ENCODE measurements at regions of chr12 and their contacts with region 1.

Region 1: GRCh38 chr12:76083904-76084862 is at the start of gene NAP1L1:
- DNase-seq: peak; percentile 98
- ATAC-seq: peak; percentile 82
- H3K4me3 ChIP-seq: peak within 1 kb of the TSS; percentile 56 to 94 (median 89)
- H3K4me3 Mint-ChIP-seq: peak within 1 kb of the TSS; percentile 99
- H3K27ac ChIP-seq: peak within 1 kb of the TSS; percentile 96 to 98
- H3K27ac Mint-ChIP-seq: peak within 1 kb of the TSS; percentile 99
- H3K4me1 ChIP-seq: peaks cover 26 to 44% of the 10 kb centered on the region in 2 donors
- H3K4me1 Mint-ChIP-seq: peaks cover 50% of the 10 kb centered on the region
- H3K27me3 ChIP-seq: no peaks in the 10 kb centered on the region
- H3K27me3 Mint-ChIP-seq: no peaks in the 10 kb centered on the region
- CTCF ChIP-seq: no peak
- total RNA-seq, gene NAP1L1: 751 and 766 TPM in 2 replicates

Region 2: GRCh38 chr12:75480469-75480949 is 603.7 kb before region 1 on chr12 and contains the start of gene GLIPR1:
- CTCF ChIA-PET with region 1: no interaction called
- POLR2A ChIA-PET with region 1: no interaction called
- intact Hi-C with region 1: loop called (anchors 2 kb)
- DNase-seq: peak; percentile 79
- ATAC-seq: peak; percentile 82
- H3K4me3 ChIP-seq: peak within 1 kb of the TSS; percentile 66 to 98 (median 80)
- H3K4me3 Mint-ChIP-seq: peak within 1 kb of the TSS; percentile 98
- H3K27ac ChIP-seq: peak within 1 kb of the TSS; percentile 75 to 79
- H3K27ac Mint-ChIP-seq: peak within 1 kb of the TSS; percentile 99
- H3K4me1 ChIP-seq: peaks cover 61 to 64% of the 10 kb centered on the region in 2 donors
- H3K4me1 Mint-ChIP-seq: peaks cover 79% of the 10 kb centered on the region
- H3K27me3 ChIP-seq: no peaks in the 10 kb centered on the region
- H3K27me3 Mint-ChIP-seq: no peaks in the 10 kb centered on the region
- CTCF ChIP-seq: no peak
- total RNA-seq, gene GLIPR1: 117 and 119 TPM in 2 replicates

Region 3: DNA sequence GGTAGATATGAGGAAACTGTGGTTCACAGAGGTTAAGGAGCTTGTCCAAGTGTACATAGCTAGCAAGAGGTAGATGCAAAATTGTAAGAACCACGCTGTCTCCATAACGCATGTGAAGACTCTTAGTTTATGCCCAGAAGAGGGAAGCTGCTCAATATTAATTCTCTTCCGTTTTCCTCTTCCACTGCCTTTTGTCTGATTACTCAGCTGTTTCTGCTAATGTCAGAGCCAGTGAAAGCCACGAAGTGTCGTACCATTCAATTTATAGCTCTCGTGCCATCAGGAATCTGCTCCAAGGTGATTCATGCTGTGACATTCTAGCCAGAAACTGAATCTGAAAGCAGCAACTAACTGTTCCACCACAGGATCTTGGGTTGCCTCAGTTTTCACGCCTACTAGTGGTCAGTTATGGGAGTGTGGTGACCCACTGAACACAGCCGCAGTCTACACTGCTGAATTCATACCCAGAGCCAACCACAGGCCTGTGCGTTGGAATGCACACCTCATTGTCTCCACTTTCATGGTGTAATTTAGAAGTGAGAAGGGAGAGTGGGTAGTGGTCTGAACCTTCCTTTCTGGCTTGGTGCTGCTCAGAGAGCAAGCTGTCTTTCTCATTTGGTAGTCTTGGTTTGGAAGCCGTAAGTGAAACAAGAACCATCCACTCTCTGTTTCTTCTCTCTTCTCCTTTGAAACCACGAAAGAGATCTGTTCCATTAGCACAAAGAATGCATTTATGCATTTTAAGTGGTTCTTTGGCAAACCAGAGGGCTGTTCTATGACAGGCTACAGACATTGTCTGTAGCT is 74.5 kb after region 1 on chr12:
- CTCF ChIA-PET with region 1: interaction called, 3 read pairs
- POLR2A ChIA-PET with region 1: no interaction called
- intact Hi-C with region 1: loop called (anchors 2 kb)
- DNase-seq: peak; percentile 82
- ATAC-seq: peak; percentile 99
- H3K4me3 ChIP-seq: peak overlapping the region; percentile 5 to 68 (median 45)
- H3K4me3 Mint-ChIP-seq: peak overlapping the region; percentile 91
- H3K27ac ChIP-seq: peak overlapping the region; percentile 14 to 76
- H3K27ac Mint-ChIP-seq: peak overlapping the region; percentile 94
- H3K4me1 ChIP-seq: peaks cover 9 to 16% of the 10 kb centered on the region in 2 donors
- H3K4me1 Mint-ChIP-seq: peaks cover 25% of the 10 kb centered on the region
- H3K27me3 ChIP-seq: no peaks in the 10 kb centered on the region
- H3K27me3 Mint-ChIP-seq: no peaks in the 10 kb centered on the region
- CTCF ChIP-seq: peak; percentile 83

Region 4: GRCh38 chr12:76176940-76177339 is 92.8 kb after region 1 on chr12:
- CTCF ChIA-PET with region 1: no interaction called
- POLR2A ChIA-PET with region 1: no interaction called
- intact Hi-C with region 1: no loop called
- DNase-seq: no peak
- ATAC-seq: no peak
- H3K4me3 ChIP-seq: no peak overlapping the region
- H3K4me3 Mint-ChIP-seq: no peak overlapping the region
- H3K27ac ChIP-seq: no peak overlapping the region
- H3K27ac Mint-ChIP-seq: no peak overlapping the region
- H3K4me1 ChIP-seq: peaks cover 21% of the 10 kb centered on the region in 2 donors
- H3K4me1 Mint-ChIP-seq: peaks cover 17% of the 10 kb centered on the region
- H3K27me3 ChIP-seq: no peaks in the 10 kb centered on the region
- H3K27me3 Mint-ChIP-seq: no peaks in the 10 kb centered on the region
- CTCF ChIP-seq: no peak

Region 5: GRCh38 chr12:76508178-76508577 is 424.0 kb after region 1 on chr12:
- CTCF ChIA-PET with region 1: no interaction called
- POLR2A ChIA-PET with region 1: no interaction called
- intact Hi-C with region 1: loop called (anchors 2 kb)
- DNase-seq: no peak
- ATAC-seq: no peak
- H3K4me3 ChIP-seq: no peak overlapping the region
- H3K4me3 Mint-ChIP-seq: no peak overlapping the region
- H3K27ac ChIP-seq: no peak overlapping the region
- H3K27ac Mint-ChIP-seq: peak overlapping the region; percentile 26
- H3K4me1 ChIP-seq: peaks cover 16 to 29% of the 10 kb centered on the region in 2 donors
- H3K4me1 Mint-ChIP-seq: peaks cover 51% of the 10 kb centered on the region
- H3K27me3 ChIP-seq: no peaks in the 10 kb centered on the region
- H3K27me3 Mint-ChIP-seq: no peaks in the 10 kb centered on the region
- CTCF ChIP-seq: no peak

Region 6: DNA sequence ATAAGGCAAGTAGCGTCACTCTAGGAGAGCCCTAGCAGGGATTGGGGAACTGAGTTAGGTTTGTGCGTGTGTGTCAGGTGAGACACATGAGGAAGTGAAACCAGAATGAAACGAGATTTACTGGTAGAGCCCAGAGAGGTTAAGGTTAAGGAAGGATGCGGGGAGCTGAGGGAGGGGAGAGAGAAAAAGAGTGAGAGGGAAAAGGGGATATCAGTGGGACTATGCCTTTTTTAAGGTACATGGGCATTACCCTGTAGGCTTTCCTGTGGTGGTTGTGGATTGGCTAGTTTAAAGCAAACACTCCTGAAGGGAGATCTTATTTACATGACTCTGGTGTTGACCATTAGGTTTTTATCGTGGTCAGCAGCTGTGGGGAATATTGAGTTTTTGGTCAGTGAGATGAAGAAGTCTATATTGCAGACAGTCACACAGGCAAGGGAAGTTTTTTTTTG is 693.6 kb after region 1 on chr12:
- CTCF ChIA-PET with region 1: no interaction called
- POLR2A ChIA-PET with region 1: no interaction called
- intact Hi-C with region 1: loop called (anchors 5 kb)
- DNase-seq: peak; percentile 89
- ATAC-seq: peak; percentile 97
- H3K4me3 ChIP-seq: no peak overlapping the region
- H3K4me3 Mint-ChIP-seq: peak overlapping the region; percentile 2
- H3K27ac ChIP-seq: peak overlapping the region; percentile 25 to 66
- H3K27ac Mint-ChIP-seq: peak overlapping the region; percentile 33
- H3K4me1 ChIP-seq: peaks cover 13 to 15% of the 10 kb centered on the region in 2 donors
- H3K4me1 Mint-ChIP-seq: peaks cover 53% of the 10 kb centered on the region
- H3K27me3 ChIP-seq: no peaks in the 10 kb centered on the region
- H3K27me3 Mint-ChIP-seq: no peaks in the 10 kb centered on the region
- CTCF ChIP-seq: no peak